Caco-2 (cell line): ENCODE measurements at regions of chr6 and their contacts with region 1.

Region 1: DNA sequence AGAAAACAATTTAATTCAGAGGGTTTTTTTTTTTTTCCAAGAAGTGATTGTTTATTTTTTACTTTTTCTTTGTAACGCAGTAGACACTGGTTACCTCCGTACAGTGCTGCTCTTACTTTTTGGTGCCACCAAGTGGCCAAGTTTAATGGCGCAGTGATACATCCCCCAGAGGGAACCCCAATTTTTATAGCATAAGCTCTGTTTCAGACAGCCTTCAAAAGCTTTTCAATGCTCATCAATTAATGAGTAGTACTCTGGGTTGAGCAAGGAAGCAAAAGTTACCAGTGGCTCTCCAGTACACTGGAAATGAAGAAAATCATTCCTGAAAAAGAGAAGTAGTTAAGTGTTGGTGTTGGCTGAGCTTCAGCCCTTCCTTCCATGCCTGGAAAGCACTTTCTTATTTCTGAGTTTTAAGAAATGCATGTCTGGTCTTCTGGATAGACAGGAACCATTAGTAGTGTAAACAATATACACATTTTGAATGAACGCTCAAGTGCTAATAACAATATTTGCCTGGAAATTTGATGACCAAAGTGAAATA is 129.1 kb upstream of the SMLR1 start:
- DNase-seq: peak; percentile 41 to 59
- H3K4me3 ChIP-seq: no peak overlapping the region
- H3K4me3 Mint-ChIP-seq: no peak overlapping the region
- H3K27ac Mint-ChIP-seq: no peak overlapping the region
- H3K4me1 ChIP-seq: no peaks in the 10 kb centered on the region
- H3K4me1 Mint-ChIP-seq: no peaks in the 10 kb centered on the region
- H3K27me3 ChIP-seq: no peaks in the 10 kb centered on the region; the same call in 1 of the 2 replicates
- H3K27me3 Mint-ChIP-seq: peaks cover 8% of the 10 kb centered on the region
- CTCF ChIP-seq: peak; percentile 77 to 83

Region 2: GRCh38 chr6:130037207-130037811 is 660.8 kb before region 1 on chr6:
- CTCF ChIA-PET with region 1: no interaction called
- POLR2A ChIA-PET with region 1: no interaction called
- intact Hi-C with region 1: loop called (anchors 5 kb)
- DNase-seq: no peak
- H3K4me3 ChIP-seq: no peak overlapping the region
- H3K4me3 Mint-ChIP-seq: no peak overlapping the region
- H3K27ac Mint-ChIP-seq: no peak overlapping the region
- H3K4me1 ChIP-seq: peaks cover 16% of the 10 kb centered on the region
- H3K4me1 Mint-ChIP-seq: peaks cover 24% of the 10 kb centered on the region
- H3K27me3 ChIP-seq: no peaks in the 10 kb centered on the region
- H3K27me3 Mint-ChIP-seq: no peaks in the 10 kb centered on the region
- CTCF ChIP-seq: peak; percentile 34 to 35

Region 3: DNA sequence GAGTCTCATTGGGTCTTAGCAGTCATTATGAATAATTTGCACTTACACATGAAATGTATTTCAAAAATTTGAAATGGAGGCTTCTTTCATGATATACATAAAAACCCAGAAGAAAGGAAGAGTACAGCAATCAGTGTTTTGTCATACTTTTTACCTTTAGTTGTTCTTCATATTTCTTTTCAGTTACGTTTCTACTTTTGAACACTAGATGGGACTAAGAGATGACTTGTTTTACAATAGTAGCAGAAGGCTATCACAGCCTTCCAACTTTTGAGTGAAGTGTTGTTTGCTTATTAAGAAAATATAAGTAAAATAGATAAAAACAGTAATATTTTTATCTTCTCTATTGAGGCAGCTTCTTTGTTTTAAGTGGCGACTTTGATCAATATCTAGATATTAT is 621.6 kb before region 1 on chr6:
- CTCF ChIA-PET with region 1: interaction called, 4 read pairs
- POLR2A ChIA-PET with region 1: no interaction called
- intact Hi-C with region 1: loop called (anchors 5 kb)
- DNase-seq: no peak
- H3K4me3 ChIP-seq: no peak overlapping the region
- H3K4me3 Mint-ChIP-seq: no peak overlapping the region
- H3K27ac Mint-ChIP-seq: no peak overlapping the region
- H3K4me1 ChIP-seq: no peaks in the 10 kb centered on the region
- H3K4me1 Mint-ChIP-seq: no peaks in the 10 kb centered on the region
- H3K27me3 ChIP-seq: no peaks in the 10 kb centered on the region
- H3K27me3 Mint-ChIP-seq: no peaks in the 10 kb centered on the region
- CTCF ChIP-seq: peak in 1 of 2 experiments; percentile 26